ENCODE measurements at regions of chr22 and their contacts with region 1.

Region 1: GRCh38 chr22:39021552-39022250 is 774 bp downstream of the APOBEC3D start:
- DNase-seq: no peak
- ATAC-seq: no peak
- H3K4me3 ChIP-seq: peak overlapping the region; percentile 78
- H3K4me3 Mint-ChIP-seq: peak overlapping the region; percentile 96
- H3K27ac ChIP-seq: peak overlapping the region; percentile 87
- H3K27ac Mint-ChIP-seq: peak overlapping the region; percentile 94 to 96
- H3K4me1 ChIP-seq: peaks cover 62% of the 10 kb centered on the region
- H3K4me1 Mint-ChIP-seq: peaks cover 27 to 69% of the 10 kb centered on the region in 2 donors
- H3K27me3 ChIP-seq: no peaks in the 10 kb centered on the region
- H3K27me3 Mint-ChIP-seq: no peaks in the 10 kb centered on the region
- CTCF ChIP-seq: no peak

Region 2: DNA sequence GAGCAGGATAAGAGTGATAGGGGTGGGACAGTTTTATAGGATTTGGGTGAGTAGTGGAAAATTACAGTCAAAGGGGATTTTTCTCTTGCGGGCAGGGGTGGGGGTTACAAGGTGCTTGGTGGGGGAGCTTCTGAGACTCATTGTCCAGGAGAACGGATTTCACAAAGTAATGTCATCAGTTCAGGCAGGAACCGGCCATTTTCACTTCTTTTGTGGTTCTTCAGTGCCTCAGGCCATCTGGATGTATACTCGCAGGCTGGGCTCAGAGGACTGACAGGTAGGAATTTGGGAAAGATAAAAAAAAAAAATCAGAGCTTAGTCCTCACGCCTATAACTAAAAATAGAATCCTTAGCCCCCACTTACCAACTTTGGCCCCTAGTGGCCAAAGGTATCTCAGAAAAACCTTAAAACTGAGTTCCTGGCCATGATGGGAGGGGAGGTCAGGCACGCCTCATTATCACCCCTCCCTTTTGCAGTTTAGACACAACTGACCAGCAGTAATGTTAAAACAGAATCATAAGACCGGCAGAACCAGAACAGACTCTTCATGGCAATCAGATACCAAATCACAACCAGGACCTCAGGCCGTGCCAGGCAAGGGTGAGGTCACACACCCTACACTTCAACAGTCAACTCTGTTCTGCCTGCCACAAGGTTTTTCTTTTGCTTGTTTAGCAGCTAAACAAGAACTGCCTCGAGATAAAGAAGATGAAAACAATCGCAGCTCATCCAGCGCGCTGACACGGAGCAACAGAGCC is 46.5 kb after region 1 on chr22:
- intact Hi-C with region 1: loop called (anchors 5 kb)
- DNase-seq: no peak
- ATAC-seq: no peak
- H3K4me3 ChIP-seq: peak overlapping the region; percentile 28
- H3K4me3 Mint-ChIP-seq: no peak overlapping the region
- H3K27ac ChIP-seq: peak overlapping the region; percentile 92
- H3K27ac Mint-ChIP-seq: no peak overlapping the region
- H3K4me1 ChIP-seq: peaks cover 51% of the 10 kb centered on the region
- H3K4me1 Mint-ChIP-seq: peaks cover 5 to 9% of the 10 kb centered on the region in 2 donors
- H3K27me3 ChIP-seq: no peaks in the 10 kb centered on the region
- H3K27me3 Mint-ChIP-seq: no peaks in the 10 kb centered on the region
- CTCF ChIP-seq: no peak

Region 3: DNA sequence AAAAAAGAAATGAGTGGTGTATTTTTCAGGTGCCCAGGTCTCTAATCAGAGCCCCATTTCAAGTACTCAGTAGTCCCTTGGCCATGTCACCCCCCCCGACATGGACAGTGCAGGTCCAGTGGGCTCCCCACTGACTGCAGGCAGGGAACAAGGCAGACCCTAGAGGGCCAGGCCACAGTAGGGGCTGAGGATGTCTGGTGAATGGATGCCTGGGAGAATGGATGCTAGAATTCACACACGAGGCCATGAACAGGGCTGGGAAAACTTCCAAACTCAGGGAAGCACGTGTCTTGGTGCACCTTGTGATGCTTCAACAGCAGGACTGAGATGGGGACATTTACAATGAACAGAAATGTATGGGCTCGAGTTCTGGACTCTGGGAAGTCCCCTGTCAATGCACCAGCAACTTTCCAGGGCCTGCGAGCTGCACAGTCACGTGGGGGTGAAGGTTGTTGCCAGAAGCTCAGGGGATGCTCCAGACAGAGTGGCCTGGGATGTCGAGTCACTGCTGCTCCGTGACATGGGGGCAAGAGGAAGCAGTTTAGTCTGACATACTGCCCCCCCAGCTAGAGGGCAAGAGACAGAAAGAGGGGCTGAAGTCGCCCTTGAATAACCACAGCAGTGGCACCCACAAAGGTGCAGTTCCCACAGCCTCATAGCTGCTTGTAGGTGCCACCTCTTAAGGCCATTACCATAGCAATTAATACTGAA is 58.5 kb after region 1 on chr22:
- intact Hi-C with region 1: loop called (anchors 5 kb)
- DNase-seq: peak; percentile 65 to 74
- ATAC-seq: peak; percentile 43 to 56 (median 51)
- H3K4me3 ChIP-seq: no peak overlapping the region
- H3K4me3 Mint-ChIP-seq: peak overlapping the region; percentile 99
- H3K27ac ChIP-seq: peak overlapping the region; percentile 76
- H3K27ac Mint-ChIP-seq: peak overlapping the region; percentile 98 to 99
- H3K4me1 ChIP-seq: peaks cover 85% of the 10 kb centered on the region
- H3K4me1 Mint-ChIP-seq: peaks cover 75 to 86% of the 10 kb centered on the region in 2 donors
- H3K27me3 ChIP-seq: no peaks in the 10 kb centered on the region
- H3K27me3 Mint-ChIP-seq: no peaks in the 10 kb centered on the region
- CTCF ChIP-seq: no peak

Region 4: GRCh38 chr22:39097098-39098020 is 75.7 kb after region 1 on chr22 and contains the start of gene APOBEC3H:
- intact Hi-C with region 1: no loop called
- DNase-seq: peak in 1 of 2 donors; percentile 74
- ATAC-seq: peak; percentile 29 to 54 (median 40)
- H3K4me3 ChIP-seq: peak within 1 kb of the TSS; percentile 17
- H3K4me3 Mint-ChIP-seq: peak within 1 kb of the TSS; percentile 81
- H3K27ac ChIP-seq: peak within 1 kb of the TSS; percentile 94
- H3K27ac Mint-ChIP-seq: peak within 1 kb of the TSS; percentile 98 to 99
- H3K4me1 ChIP-seq: peaks cover 85% of the 10 kb centered on the region
- H3K4me1 Mint-ChIP-seq: peaks cover 56 to 66% of the 10 kb centered on the region in 2 donors
- H3K27me3 ChIP-seq: no peaks in the 10 kb centered on the region
- H3K27me3 Mint-ChIP-seq: no peaks in the 10 kb centered on the region
- CTCF ChIP-seq: no peak
- total RNA-seq, gene APOBEC3H: 14.1 to 17.0 (median 14.6) TPM